Lower lobe of right lung (tissue), 2 donors: ENCODE measurements at regions of chr13 and their contacts with region 1.

Region 1: GRCh38 chr13:85806553-85807175 is 7.4 kb upstream of the SLITRK6 start:
- DNase-seq: no peak
- ATAC-seq: no peak
- H3K4me3 ChIP-seq: no peak overlapping the region
- H3K27ac ChIP-seq: no peak overlapping the region
- H3K4me1 ChIP-seq: no peaks in the 10 kb centered on the region
- H3K27me3 ChIP-seq: no peaks in the 10 kb centered on the region
- CTCF ChIP-seq: peak; percentile 69

Region 2: GRCh38 chr13:84896128-84896527 is 910.5 kb before region 1 on chr13:
- intact Hi-C with region 1: loop called (anchors 5 kb)
- DNase-seq: no peak
- ATAC-seq: peak in 1 of 2 donors; percentile 52
- H3K4me3 ChIP-seq: no peak overlapping the region
- H3K27ac ChIP-seq: no peak overlapping the region
- H3K4me1 ChIP-seq: no peaks in the 10 kb centered on the region
- H3K27me3 ChIP-seq: no peaks in the 10 kb centered on the region
- CTCF ChIP-seq: peak; percentile 52

Region 3: GRCh38 chr13:86185107-86185506 is 378.4 kb after region 1 on chr13:
- intact Hi-C with region 1: no loop called
- DNase-seq: no peak
- ATAC-seq: peak in 1 of 2 donors; percentile 28
- H3K4me3 ChIP-seq: no peak overlapping the region
- H3K27ac ChIP-seq: no peak overlapping the region
- H3K4me1 ChIP-seq: no peaks in the 10 kb centered on the region
- H3K27me3 ChIP-seq: no peaks in the 10 kb centered on the region
- CTCF ChIP-seq: no peak